OCI-LY7 (cell line): ENCODE measurements at regions of chr6 and their contacts with region 1.

Region 1: DNA sequence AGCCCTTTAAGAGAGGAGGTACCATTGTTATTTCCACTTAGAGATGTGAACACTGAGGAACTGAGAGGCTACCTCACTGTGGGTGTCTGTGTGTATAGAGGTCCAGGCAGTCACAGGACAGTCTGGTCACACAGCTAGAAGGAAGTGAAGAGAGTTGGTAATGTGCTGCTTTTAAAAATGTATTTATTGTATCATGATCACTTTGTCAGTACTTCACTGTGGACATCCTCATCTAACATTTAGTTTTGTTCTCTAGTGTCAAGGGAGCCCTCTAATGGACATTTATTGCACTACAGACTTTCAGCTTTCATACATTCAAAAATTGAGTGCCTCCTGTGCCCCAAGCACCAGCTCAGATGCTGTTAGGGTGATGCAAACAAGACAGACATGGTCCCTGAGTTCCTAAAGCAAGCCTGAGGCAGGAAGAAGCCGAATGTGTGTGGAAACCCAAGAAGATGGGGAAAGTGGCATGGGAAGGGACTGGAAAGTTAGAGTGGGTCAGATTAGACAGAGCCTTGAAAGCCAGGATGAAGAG is 123.0 kb downstream of the SLC16A10 start:
- DNase-seq: peak; percentile 62
- H3K4me3 ChIP-seq: no peak overlapping the region
- H3K27ac ChIP-seq: no peak overlapping the region
- H3K4me1 ChIP-seq: no peaks in the 10 kb centered on the region
- CTCF ChIP-seq: peak; percentile 89

Region 2: DNA sequence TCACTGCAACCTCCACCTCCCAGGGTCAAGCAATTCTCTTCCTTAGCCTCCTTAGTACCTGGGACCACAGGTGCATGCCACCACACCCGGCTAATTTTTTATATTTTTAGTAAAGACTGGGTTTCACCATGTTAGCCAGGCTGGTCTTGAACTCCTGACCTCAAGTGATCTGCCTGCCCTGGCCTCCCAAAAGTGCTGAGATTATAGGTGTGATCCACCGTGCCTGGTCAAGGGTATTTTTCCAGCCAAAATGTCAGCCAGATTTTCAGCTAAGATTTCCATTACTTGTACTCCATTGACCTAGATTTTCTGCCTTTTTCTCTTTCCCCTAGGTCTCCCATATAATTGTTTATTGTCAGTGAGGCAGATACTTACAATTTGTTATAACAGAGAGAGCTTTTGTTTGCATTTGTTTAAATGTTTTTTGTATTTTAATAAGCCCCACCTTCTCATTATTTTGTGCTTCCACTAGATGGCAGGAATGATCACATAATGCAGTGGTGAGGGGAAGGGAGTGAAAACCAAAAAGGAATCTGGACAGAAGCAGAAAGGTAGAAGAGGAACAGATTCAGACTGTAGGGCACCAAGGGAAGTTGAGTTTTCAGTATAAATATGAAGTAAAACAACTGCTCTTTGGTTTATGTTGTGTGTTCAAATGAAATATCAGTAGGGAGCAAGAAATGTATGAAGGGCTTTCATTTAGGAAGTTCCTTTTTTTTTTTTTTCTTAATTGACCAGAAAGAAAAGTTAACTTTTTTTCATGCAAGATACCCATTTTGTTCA is 198.7 kb before region 1 on chr6:
- CTCF ChIA-PET with region 1: no interaction called
- POLR2A ChIA-PET with region 1: no interaction called
- intact Hi-C with region 1: loop called (anchors 5 kb)
- DNase-seq: peak; percentile 40
- H3K4me3 ChIP-seq: no peak overlapping the region
- H3K27ac ChIP-seq: no peak overlapping the region
- H3K4me1 ChIP-seq: no peaks in the 10 kb centered on the region
- CTCF ChIP-seq: peak; percentile 82

Region 3: GRCh38 chr6:111057074-111057752 is 153.0 kb before region 1 on chr6:
- CTCF ChIA-PET with region 1: no interaction called
- POLR2A ChIA-PET with region 1: no interaction called
- intact Hi-C with region 1: loop called (anchors 1 kb)
- DNase-seq: peak; percentile 55
- H3K4me3 ChIP-seq: no peak overlapping the region
- H3K27ac ChIP-seq: no peak overlapping the region
- H3K4me1 ChIP-seq: no peaks in the 10 kb centered on the region
- CTCF ChIP-seq: peak; percentile 92

Region 4: DNA sequence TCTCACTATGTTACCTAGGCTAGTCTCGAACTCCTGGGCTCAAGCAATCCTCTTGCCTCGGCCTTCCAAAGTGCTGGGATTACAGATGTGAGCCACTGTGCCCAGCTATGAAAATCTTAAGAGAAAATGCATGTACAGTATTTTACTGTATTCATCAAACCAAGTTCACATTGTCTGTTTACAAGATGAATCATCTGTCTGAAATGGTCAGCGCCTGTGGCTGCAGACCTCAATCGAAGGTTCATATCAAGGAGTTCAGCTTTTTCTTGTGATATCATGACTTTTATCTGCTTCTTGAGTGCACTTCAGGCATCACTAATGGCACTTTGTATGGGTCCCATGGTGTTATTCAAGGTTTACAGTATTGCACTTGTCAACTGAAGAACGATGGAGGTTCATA is 32.2 kb after region 1 on chr6:
- CTCF ChIA-PET with region 1: no interaction called
- POLR2A ChIA-PET with region 1: no interaction called
- intact Hi-C with region 1: no loop called
- DNase-seq: no peak
- H3K4me3 ChIP-seq: no peak overlapping the region
- H3K27ac ChIP-seq: no peak overlapping the region
- H3K4me1 ChIP-seq: no peaks in the 10 kb centered on the region
- CTCF ChIP-seq: no peak

Region 5: GRCh38 chr6:111306104-111306888 is 96.0 kb after region 1 on chr6:
- CTCF ChIA-PET with region 1: no interaction called
- POLR2A ChIA-PET with region 1: no interaction called
- intact Hi-C with region 1: no loop called
- DNase-seq: no peak
- H3K4me3 ChIP-seq: no peak overlapping the region
- H3K27ac ChIP-seq: no peak overlapping the region
- H3K4me1 ChIP-seq: peaks cover 18% of the 10 kb centered on the region
- CTCF ChIP-seq: 0 out of 2 replicates have a peak, but pooled peaks have one; percentile 10